Right ventricle myocardium superior (tissue), 1 donor: ENCODE measurements at regions of chr6 and their contacts with region 1.

Region 1: DNA sequence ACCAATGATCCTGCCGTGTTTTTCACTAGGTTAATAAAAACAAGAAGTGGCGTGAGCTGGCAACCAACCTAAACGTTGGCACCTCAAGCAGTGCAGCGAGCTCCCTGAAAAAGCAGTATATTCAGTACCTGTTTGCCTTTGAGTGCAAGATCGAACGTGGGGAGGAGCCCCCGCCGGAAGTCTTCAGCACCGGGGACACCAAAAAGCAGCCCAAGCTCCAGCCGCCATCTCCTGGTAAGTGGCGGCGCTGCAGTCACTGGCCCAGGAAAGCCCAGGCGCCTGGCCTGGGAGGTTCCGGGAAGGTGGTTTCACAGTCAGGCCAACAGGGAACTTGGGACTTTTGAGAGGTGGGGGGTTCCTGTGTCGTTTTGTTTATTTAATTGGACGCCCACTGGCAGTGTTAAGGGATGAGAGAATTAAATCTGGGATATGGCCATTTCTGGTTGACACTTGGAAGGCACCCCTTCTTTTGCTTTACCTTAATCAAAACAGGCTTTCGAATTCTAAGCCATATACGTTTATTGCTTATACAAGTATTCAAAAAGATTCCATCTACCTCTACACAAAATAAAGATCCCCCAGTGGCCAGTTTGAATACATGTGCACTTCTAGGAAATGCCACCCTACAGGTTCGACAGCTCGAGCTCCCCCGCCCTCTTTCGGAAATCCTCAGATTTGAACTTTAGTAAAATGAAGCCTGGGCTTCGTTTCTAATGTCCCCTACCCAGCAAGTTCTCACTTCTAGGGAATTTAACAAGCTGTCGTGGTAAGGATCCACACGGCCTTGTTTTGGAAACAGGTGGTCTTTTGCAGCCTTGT is 138.9 kb downstream of the TMEM242 start:
- DNase-seq: peak; percentile 83
- ATAC-seq: peak; percentile 79

Region 2: GRCh38 chr6:157034436-157035230 is 149.8 kb before region 1 on chr6:
- intact Hi-C with region 1: loop called (anchors 5 kb)
- DNase-seq: no peak
- ATAC-seq: peak; percentile 69